ENCODE measurements at regions of chr6 and their contacts with region 1.

Region 1: GRCh38 chr6:1335367-1336037 is 23.6 kb downstream of the FOXQ1 start:
- DNase-seq: peak; percentile 96
- ATAC-seq: peak; percentile 93
- H3K4me3 ChIP-seq: peak overlapping the region; percentile 13; the same call in 1 of the 2 replicates
- H3K27ac ChIP-seq: peak overlapping the region; percentile 75
- H3K4me1 ChIP-seq: peaks cover 43% of the 10 kb centered on the region
- H3K27me3 ChIP-seq: no peaks in the 10 kb centered on the region
- CTCF ChIP-seq: no peak

Region 2: DNA sequence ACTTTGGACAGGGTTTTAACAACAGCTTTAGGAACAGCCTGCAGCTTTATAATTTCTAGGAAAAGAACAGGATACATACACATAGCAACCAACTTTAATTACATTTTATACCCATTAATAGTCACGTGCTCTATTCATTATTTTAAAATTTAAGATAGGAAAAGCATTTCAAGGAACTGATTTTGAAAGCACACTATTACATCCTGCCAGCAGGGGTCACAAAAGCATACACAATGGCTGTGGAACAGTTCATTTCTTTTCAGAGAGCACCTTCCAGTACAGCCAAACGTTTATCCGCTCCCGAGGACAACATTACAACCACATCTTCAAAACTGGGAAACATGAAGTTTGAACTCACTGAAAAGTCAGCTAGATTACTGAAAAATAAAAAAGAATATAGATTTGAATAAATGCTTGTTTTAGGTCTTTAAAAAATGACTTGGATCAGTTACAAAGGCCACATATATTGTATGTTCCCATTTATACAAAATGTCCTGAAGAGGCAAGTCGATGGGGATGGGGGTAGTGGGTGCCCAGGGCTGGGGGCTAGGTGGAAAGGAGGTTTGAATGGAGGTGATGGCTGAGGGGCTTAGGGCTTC is 537.9 kb before region 1 on chr6:
- CTCF ChIA-PET with region 1: no interaction called
- POLR2A ChIA-PET with region 1: no interaction called
- intact Hi-C with region 1: loop called (anchors 1 kb)
- DNase-seq: peak; percentile 66
- ATAC-seq: peak; percentile 70
- H3K4me3 ChIP-seq: no peak overlapping the region
- H3K27ac ChIP-seq: no peak overlapping the region
- H3K4me1 ChIP-seq: no peaks in the 10 kb centered on the region
- H3K27me3 ChIP-seq: peaks cover 87% of the 10 kb centered on the region
- CTCF ChIP-seq: peak; percentile 85

Region 3: DNA sequence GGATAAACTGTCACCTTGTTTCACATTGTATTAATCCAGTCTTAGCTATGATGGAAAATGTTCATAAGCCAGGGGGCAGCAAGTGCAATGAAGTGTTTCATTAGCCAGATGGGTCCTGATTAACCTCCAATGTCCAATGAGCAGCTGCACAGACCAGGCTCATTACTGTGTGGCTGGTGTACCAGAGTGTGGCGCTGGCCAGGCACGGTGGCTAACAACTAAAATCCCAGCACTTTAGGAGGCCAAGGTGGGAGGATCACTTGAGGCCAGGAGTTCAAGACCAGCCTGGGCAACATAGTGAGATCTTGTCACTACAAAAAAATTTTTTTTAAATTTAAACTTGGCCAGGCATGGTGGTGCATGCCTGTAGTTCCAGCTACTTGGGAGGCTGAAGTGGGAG is 225.3 kb before region 1 on chr6:
- CTCF ChIA-PET with region 1: no interaction called
- POLR2A ChIA-PET with region 1: no interaction called
- intact Hi-C with region 1: loop called (anchors 1 kb)
- DNase-seq: peak; percentile 15
- ATAC-seq: peak; percentile 33; the same call in 1 of the 2 replicates
- H3K4me3 ChIP-seq: no peak overlapping the region
- H3K27ac ChIP-seq: no peak overlapping the region
- H3K4me1 ChIP-seq: no peaks in the 10 kb centered on the region
- H3K27me3 ChIP-seq: peaks cover 73% of the 10 kb centered on the region
- CTCF ChIP-seq: no peak; the same call in 1 of the 2 replicates

Region 4: DNA sequence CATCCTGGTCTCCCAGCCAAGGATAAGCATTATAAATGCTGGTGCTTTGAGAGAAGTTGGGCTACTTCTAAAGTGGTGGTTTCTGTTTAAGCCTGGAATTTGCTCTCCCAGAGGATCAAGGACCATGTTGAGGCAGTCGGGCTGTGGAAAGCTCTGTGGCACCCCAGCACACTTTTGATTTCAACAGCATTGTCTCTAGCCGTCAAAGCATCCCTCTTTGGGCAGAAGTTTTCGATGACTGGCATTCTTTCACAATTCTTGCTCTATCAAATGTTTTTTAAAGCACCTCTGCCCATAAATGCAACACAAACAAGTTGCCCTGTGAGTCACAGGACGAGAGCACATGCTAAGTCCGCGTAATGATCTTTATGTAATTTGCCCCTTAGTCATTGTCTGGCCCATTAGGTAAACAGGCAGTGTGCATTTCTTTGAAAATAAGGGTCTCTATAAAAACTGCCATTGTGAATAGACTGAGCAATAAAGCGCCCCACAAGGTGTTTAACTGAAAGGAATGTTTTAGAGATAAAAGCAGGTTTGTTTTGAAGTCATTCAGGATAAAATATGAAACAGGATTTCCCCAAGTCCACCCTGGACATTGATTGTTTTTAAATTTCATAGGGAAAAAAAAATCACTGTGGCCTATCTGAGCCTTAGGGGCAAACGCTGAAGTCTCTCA is 68.3 kb before region 1 on chr6:
- CTCF ChIA-PET with region 1: no interaction called
- POLR2A ChIA-PET with region 1: no interaction called
- intact Hi-C with region 1: loop called (anchors 1 kb)
- DNase-seq: peak; percentile 86
- ATAC-seq: peak; percentile 92
- H3K4me3 ChIP-seq: no peak overlapping the region
- H3K27ac ChIP-seq: peak overlapping the region; percentile 39
- H3K4me1 ChIP-seq: peaks cover 13% of the 10 kb centered on the region
- H3K27me3 ChIP-seq: no peaks in the 10 kb centered on the region
- CTCF ChIP-seq: no peak